Common myeloid progenitor, CD34-positive (primary cell): ENCODE measurements at regions of chr19 and their contacts with region 1.

Region 1: GRCh38 chr19:43532962-43533545 is at the start of gene ZNF575:
- DNase-seq: peak; percentile 92 to 96 (median 94)
- H3K4me3 ChIP-seq: peak within 1 kb of the TSS; percentile 69 to 90 (median 76)
- H3K27ac ChIP-seq: peak within 1 kb of the TSS in 1 of 2 experiments; percentile 15
- H3K4me1 ChIP-seq: peaks cover 0 to 29% (median 25%) of the 10 kb centered on the region in 4 experiments
- H3K27me3 ChIP-seq: no peaks in the 10 kb centered on the region

Region 2: DNA sequence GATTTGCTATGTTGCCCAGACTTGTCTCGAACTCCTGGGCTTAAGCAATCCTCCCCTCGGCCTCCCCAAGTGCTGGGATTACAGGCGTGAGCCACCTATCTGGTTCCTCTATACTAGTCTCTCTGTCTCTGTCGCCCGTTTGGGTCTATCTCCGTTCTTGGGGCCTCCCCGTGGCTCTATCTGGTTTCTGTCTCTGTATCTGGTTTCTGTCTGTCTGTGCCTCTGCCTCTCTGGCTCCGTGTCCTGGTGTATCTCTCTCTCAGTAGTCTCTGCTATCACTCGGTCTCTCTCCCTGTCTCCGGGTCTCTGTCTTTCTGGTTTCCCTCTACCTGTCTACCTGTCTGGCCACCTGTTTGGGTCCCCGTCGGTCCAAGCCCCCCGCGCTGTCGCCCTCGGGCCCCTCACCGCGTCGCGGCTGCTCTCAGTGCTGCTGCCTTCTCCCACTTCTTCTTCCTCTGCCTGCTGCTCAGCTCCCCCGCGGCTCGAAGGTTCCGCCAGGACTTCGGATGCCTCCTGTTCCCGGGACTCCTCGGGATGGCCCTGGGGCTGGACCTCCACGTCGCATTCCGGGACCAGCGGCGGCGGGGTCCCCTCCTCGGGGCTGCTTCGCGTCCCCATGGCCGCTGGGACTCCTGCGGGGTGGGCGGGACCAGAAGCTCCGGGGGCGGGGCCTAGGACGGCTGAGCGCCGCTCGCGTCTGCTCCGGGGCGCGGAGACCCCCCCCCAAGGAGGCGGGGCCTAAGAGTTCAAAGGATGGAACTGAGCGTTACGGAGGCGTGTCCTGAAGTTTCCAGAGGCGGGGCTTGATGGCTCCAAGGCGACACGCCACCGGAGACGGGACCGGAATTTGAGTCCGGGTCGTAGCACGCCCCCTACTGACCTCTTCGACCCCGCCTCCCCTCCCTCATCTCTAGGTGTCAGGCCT is 29.3 kb before region 1 on chr19:
- CTCF ChIA-PET with region 1: no interaction called
- POLR2A ChIA-PET with region 1: no interaction called
- DNase-seq: peak; percentile 94 to 97 (median 95)
- H3K4me3 ChIP-seq: peak overlapping the region; percentile 70 to 93 (median 85)
- H3K27ac ChIP-seq: peak overlapping the region in 1 of 2 experiments; percentile 79
- H3K4me1 ChIP-seq: peaks cover 0 to 24% (median 20%) of the 10 kb centered on the region in 4 experiments
- H3K27me3 ChIP-seq: no peaks in the 10 kb centered on the region

Region 3: DNA sequence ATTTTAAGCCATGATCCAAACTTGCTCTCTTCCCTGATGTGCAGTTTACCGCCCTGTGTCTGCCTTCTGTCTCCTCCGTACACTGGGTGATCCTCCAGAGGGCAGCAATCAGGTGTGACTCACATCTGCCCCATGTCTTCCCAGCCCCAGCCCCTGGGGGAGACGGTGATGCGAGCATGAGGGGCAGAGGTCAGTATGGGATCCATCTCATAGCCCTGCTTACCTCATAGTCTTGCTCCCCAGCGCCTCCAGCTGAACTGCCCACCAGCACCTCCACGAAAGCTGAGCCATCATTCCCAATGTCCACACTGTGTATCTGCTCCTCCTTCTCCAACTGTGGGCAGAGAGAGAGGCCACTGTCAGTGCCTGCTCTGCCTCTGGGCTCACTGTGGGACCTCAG is 27.6 kb after region 1 on chr19:
- CTCF ChIA-PET with region 1: interaction called, 111 read pairs
- POLR2A ChIA-PET with region 1: no interaction called
- DNase-seq: peak in 1 of 3 donors; percentile 37
- H3K4me3 ChIP-seq: no peak overlapping the region
- H3K27ac ChIP-seq: no peak overlapping the region
- H3K4me1 ChIP-seq: peaks cover 7 to 46% (median 37%) of the 10 kb centered on the region in 4 experiments
- H3K27me3 ChIP-seq: no peaks in the 10 kb centered on the region

Region 4: GRCh38 chr19:43589678-43590077 is 56.6 kb after region 1 on chr19:
- CTCF ChIA-PET with region 1: interaction called, 46 read pairs
- POLR2A ChIA-PET with region 1: interaction called, 6 read pairs
- DNase-seq: peak in 2 of 3 donors; percentile 48 to 55
- H3K4me3 ChIP-seq: no peak overlapping the region
- H3K27ac ChIP-seq: no peak overlapping the region
- H3K4me1 ChIP-seq: peaks cover 0 to 13% (median 8%) of the 10 kb centered on the region in 4 experiments
- H3K27me3 ChIP-seq: no peaks in the 10 kb centered on the region

Region 5: DNA sequence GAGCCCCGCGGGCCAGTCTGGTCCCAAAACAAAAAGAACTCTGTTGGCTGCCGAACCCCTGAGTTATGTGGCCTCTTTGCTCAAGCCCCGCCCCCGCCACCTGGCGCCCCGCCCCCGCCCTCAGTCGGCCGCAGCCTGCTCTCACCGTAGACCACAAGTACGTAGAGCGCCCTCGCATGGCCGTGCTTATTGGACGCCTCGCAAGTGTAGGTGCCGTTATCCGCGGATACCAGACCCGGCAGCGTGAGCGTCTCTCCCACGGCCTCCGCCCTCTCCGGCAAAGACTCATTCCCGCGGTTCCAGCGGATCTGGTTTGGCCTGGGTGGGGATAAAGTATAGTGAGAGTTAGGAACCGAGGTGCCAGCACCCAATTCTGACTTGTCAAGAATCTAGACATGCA is 91.9 kb after region 1 on chr19:
- CTCF ChIA-PET with region 1: interaction called, 10 read pairs
- POLR2A ChIA-PET with region 1: no interaction called
- DNase-seq: peak; percentile 87 to 95 (median 93)
- H3K4me3 ChIP-seq: peak overlapping the region in 1 of 7 experiments; percentile 54
- H3K27ac ChIP-seq: no peak overlapping the region
- H3K4me1 ChIP-seq: peaks cover 0 to 18% (median 10%) of the 10 kb centered on the region in 4 experiments
- H3K27me3 ChIP-seq: peaks cover 0 to 21% (median 5%) of the 10 kb centered on the region in 5 experiments